ENCODE measurements at regions of chr10 and their contacts with region 1.

Region 1: DNA sequence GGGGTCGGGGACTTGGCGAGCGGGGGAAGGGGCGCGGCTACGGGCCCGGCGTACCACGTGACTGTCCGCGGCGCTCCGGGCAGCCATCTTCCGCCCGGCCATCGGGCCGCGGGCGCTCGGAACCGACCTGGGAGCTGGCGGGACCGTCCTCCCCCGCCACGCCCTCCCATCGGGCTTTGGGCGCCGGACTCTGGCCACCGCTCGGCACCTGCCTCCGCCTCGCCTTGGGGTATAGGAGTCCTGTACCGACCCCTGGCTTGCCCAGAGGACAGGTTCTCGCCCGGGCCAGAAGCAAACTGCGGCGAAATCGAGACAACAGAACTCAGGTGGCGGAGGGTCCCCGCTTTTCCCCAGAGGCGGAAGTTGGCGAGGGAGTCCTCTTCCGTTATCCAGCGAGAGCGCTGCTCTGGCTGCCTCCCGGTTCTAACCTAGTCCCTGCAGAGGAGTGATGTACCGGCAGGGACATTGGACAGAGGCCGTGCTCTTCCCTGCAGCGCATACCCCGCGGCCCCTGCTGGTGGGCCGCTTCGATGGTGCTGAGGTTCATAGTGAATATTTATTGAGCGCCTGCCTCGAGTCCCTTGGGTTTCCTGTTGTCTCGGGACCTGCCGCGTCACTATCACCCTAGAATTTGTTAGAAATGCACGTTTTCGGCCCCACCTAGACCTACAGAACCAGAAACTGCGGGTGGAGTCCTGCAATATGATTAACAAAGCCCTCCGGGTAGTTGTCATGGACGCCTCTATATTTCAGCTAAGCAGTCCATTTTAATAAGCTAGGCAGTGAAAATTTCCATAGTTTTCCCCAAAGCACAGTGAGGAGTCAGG is 1.3 kb upstream of the SGMS1 start:
- DNase-seq: peak; percentile 43 to 89 (median 74)

Region 2: DNA sequence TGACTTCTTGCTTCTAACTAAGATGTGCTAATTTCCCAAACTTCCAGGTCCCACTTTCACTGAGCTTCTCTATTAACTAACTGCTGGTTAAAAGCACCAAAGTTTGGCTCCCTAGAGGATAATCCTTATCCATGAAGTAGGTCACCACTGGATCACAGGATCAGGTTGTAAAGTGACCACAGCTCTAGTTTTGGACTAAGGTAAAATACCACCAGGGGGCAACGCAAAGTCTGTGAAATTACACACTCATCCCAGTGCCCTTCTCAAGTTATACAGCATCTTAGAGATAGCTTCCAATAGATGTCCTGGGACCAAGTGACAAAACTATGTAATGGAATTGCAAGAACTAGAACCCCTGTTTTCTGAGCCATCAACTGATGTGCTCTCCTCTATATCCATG is 257.3 kb before region 1 on chr10:
- intact Hi-C with region 1: loop called (anchors 5 kb)
- DNase-seq: peak in 1 of 42 donors; percentile 20

Region 3: GRCh38 chr10:50417886-50418830 is 206.9 kb before region 1 on chr10:
- intact Hi-C with region 1: loop called (anchors 2 kb)
- DNase-seq: peak in 40 of 42 donors; percentile 15 to 81 (median 62)

Region 4: GRCh38 chr10:50508315-50509051 is 116.6 kb before region 1 on chr10:
- intact Hi-C with region 1: loop called (anchors 1 kb)
- DNase-seq: no peak

Region 5: DNA sequence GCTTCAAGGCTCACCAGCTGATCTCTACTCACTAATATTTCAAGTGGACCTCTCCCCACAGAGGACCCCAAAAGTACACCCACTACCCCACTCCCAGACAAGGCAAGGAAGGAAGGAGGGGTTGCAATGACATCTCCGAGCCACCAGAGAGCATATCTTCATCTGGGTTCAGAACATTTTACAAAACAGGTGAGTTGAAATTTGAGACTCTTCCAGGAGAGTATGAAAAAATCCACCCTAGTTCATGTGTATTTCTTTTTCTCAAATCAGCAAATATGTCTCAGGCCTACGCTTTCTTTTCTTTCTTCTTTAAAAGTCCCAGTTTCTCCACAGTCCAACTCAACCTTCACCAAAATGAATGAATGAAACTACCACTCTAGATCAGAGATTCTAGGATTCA is 63.3 kb before region 1 on chr10:
- intact Hi-C with region 1: loop called (anchors 5 kb)
- DNase-seq: peak in 4 of 42 donors; percentile 13 to 36 (median 22)

Region 6: GRCh38 chr10:50576245-50576815 is 48.7 kb before region 1 on chr10:
- intact Hi-C with region 1: loop called (anchors 1 kb)
- DNase-seq: peak; percentile 27 to 94 (median 76)